Mammary epithelial cell (primary cell): ENCODE measurements at regions of chr6 and their contacts with region 1.

Region 1: GRCh38 chr6:29724937-29725869 is 2.0 kb downstream of the HLA-F start:
- DNase-seq: no peak
- H3K4me3 ChIP-seq: no peak overlapping the region
- H3K27ac ChIP-seq: no peak overlapping the region
- H3K4me1 ChIP-seq: no peaks in the 10 kb centered on the region
- H3K27me3 ChIP-seq: no peaks in the 10 kb centered on the region
- CTCF ChIP-seq: no peak

Region 2: GRCh38 chr6:29641430-29642148 is 83.6 kb before region 1 on chr6:
- CTCF ChIA-PET with region 1: no interaction called
- dilution Hi-C with region 1: loop called (anchors 5 kb)
- in situ Hi-C with region 1: no loop called
- intact Hi-C with region 1: no loop called
- DNase-seq: peak; percentile 27
- H3K4me3 ChIP-seq: no peak overlapping the region
- H3K27ac ChIP-seq: no peak overlapping the region
- H3K4me1 ChIP-seq: peaks cover 3% of the 10 kb centered on the region
- H3K27me3 ChIP-seq: no peaks in the 10 kb centered on the region
- CTCF ChIP-seq: no peak

Region 3: GRCh38 chr6:29678114-29678513 is 47.1 kb before region 1 on chr6:
- CTCF ChIA-PET with region 1: no interaction called
- dilution Hi-C with region 1: loop called (anchors 5 kb)
- in situ Hi-C with region 1: no loop called
- intact Hi-C with region 1: no loop called
- DNase-seq: peak; percentile 88
- H3K4me3 ChIP-seq: peak overlapping the region in 1 of 3 experiments; percentile 2
- H3K27ac ChIP-seq: peak overlapping the region; percentile 84
- H3K4me1 ChIP-seq: peaks cover 53% of the 10 kb centered on the region
- H3K27me3 ChIP-seq: no peaks in the 10 kb centered on the region
- CTCF ChIP-seq: no peak

Region 4: DNA sequence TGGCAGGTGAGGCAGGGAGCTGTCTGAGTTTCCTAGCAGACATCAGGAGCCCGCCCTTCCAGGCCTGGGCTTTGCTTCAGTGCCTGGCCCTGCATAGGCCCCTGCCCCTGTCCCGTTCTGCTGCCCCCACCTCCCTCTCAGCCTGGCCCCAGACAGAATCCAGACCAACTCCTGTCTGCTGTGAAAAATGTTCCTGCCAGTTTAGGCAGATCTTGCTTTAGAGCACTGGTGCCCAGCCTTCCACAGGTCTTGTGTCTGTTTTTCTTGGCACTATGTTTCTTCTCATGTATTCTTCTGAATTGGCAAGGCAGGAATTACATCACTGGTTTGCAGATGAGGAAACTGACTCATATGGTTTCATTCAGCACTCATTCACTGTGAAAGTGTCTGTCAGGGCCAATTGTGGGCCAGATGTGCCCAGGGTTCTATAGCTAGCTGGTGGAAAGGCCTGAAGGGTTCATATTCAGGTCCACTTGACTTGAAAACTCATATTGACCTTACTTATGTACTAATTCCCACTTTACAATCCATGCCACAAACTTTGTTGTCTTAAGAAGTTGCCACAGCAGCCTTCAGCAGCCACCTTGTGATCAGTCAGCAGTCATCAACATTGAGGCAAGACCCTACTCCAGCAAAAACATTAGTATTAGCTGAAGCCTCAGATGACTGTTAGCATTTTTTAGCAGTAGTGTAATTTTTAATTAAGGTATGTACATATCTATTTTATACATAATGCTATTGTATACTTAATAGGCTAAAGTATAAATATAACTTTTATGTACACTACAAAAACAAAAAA is 38.5 kb after region 1 on chr6:
- CTCF ChIA-PET with region 1: no interaction called
- dilution Hi-C with region 1: loop called (anchors 5 kb)
- in situ Hi-C with region 1: no loop called
- intact Hi-C with region 1: no loop called
- DNase-seq: peak; percentile 95
- H3K4me3 ChIP-seq: no peak overlapping the region
- H3K27ac ChIP-seq: peak overlapping the region; percentile 81
- H3K4me1 ChIP-seq: peaks cover 41% of the 10 kb centered on the region
- H3K27me3 ChIP-seq: no peaks in the 10 kb centered on the region
- CTCF ChIP-seq: no peak